Naive thymus-derived CD4-positive, alpha-beta T cell (primary cell): ENCODE measurements at regions of chr14 and their contacts with region 1.

Region 1: DNA sequence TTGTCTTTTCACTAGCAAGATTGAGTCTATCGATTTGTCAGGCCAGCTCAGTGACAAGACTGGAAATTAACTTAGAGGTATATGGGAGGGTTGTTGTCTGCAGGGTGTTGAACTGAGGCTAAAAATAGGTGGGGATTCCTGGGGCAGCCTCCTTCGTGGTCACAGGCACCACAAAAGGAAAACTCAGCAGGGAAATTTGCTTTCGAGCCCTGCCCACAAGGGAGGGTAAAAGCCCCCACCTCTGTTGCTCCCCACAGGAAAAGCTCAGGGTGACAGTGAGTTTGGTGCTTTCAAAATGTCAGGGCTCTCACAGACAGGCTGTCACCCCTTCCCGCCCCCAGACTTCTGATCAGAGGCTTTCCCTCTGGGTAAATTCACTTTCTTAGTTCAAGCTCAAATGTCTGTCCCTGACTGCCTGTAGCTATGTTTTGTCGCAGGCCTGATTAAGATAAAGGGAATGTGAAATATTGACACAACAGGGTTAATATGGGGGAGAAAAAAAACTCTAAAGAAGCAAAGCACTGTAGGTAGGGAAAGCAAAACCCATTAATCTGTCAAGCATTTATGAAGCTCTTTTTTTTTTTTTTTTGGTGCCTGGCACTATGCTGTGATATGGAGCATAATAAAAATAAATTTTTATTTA is 11.7 kb upstream of the NFKBIA start:
- DNase-seq: peak in 6 of 9 donors; percentile 18 to 80 (median 30)
- ATAC-seq: peak; percentile 67
- H3K4me3 ChIP-seq: no peak overlapping the region
- H3K4me3 Mint-ChIP-seq: peak overlapping the region; percentile 46 to 81 (median 72)
- H3K27ac ChIP-seq: peak overlapping the region; percentile 73
- H3K27ac Mint-ChIP-seq: peak overlapping the region; percentile 76 to 95 (median 92)
- H3K4me1 ChIP-seq: peaks cover 31 to 32% of the 10 kb centered on the region in 2 donors
- H3K4me1 Mint-ChIP-seq: peaks cover 29 to 48% (median 45%) of the 10 kb centered on the region in 7 donors
- H3K27me3 ChIP-seq: no peaks in the 10 kb centered on the region
- H3K27me3 Mint-ChIP-seq: peaks cover 0 to 7% (median 0%) of the 10 kb centered on the region in 5 donors

Region 2: DNA sequence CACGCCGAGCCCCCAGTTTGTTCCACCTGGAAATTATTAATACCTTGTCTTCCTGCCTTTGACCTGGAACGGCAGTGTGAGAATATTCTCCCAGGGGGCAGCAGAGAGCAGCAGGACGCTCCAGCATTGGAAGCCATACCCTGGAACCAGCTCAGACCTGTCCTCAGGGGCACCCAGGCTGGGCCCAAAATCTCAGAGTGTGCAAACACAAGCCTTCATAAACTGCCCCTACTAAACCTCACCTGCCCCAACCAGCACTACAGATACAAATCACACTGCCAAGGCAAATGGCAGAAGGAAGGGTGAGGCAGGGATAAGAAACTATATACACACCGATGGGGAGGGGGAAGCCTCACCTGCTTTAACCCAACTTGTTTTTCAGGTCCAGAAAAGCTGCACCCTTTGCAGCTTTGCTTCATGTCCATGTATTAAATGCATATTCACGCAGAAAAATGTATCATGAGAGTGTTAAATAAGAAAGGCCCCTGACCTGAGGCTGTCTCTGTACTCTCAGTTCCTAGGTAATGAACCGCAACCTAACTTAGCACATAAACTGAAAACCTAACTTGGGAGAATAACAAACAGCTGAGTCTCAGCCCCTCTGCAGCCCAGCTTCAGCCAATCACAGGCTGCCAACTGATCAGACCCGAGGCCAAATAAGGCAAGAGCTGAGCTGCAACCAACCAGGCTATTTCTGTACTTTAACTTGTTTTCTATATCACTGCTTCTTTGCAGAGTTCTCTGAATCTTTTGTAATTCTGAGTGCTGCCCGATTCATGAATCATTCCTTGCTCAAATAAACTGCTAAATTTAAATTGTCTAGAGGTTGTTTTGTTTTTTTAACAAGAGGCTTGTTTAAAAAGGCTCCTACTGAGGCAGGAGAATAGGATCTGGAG is 1084.3 kb before region 1 on chr14:
- CTCF ChIA-PET with region 1: interaction called, 4 read pairs
- POLR2A ChIA-PET with region 1: no interaction called
- intact Hi-C with region 1: loop called in 1 of 2 experiments (anchors 5 kb)
- DNase-seq: peak; percentile 11 to 62 (median 44)
- ATAC-seq: peak; percentile 80
- H3K4me3 ChIP-seq: no peak overlapping the region
- H3K4me3 Mint-ChIP-seq: no peak overlapping the region
- H3K27ac ChIP-seq: no peak overlapping the region
- H3K27ac Mint-ChIP-seq: peak overlapping the region in 3 of 9 donors; percentile 13 to 54 (median 30)
- H3K4me1 ChIP-seq: no peaks in the 10 kb centered on the region
- H3K4me1 Mint-ChIP-seq: peaks cover 0 to 19% (median 4%) of the 10 kb centered on the region in 7 donors
- H3K27me3 ChIP-seq: no peaks in the 10 kb centered on the region
- H3K27me3 Mint-ChIP-seq: no peaks in the 10 kb centered on the region

Region 3: DNA sequence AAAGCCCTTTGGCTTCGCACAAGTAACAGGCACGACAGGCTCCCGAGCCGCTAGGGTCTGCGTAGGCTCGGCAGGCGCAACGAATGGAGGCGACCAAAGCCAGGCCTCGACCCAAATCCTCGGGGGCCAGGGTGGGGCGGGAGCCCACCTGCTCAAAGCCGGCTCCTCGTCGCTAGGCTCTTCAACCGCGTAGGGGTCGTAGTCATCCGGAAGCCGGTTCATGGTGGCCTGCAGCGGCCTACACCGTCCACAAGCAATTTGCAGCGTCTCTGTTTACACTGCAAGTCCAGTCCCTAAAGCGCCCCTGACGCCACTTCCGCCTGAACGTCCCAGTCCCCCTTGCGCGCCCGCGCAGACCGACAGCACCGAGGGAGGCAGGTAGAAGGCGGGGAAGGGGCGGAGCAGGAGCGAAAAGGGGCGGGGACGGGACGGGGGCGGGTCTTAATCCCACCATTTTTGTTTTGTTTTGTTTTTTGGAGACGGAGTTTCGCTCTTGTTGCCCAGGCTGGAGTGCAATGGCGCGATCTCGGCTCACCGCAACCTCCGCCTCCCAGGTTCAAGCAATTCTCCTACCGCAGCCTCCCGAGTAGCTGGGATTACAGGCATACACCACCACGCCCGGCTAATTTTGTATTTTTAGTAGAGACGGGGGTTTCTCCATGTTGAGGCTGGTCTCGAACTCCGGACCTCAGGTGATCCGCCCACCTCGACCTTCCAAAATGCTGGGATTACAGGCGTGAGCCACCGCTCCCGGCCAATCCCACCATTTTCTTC is 876.6 kb before region 1 on chr14 and contains the start of gene EAPP:
- CTCF ChIA-PET with region 1: no interaction called
- POLR2A ChIA-PET with region 1: no interaction called
- intact Hi-C with region 1: loop called in 1 of 2 experiments (anchors 5 kb)
- DNase-seq: peak; percentile 84 to 95 (median 91)
- ATAC-seq: peak; percentile 100
- H3K4me3 ChIP-seq: peak within 1 kb of the TSS; percentile 100
- H3K4me3 Mint-ChIP-seq: peak within 1 kb of the TSS; percentile 95 to 99 (median 99)
- H3K27ac ChIP-seq: peak within 1 kb of the TSS; percentile 97
- H3K27ac Mint-ChIP-seq: peak within 1 kb of the TSS; percentile 95 to 100 (median 99)
- H3K4me1 ChIP-seq: peaks cover 18 to 24% of the 10 kb centered on the region in 2 donors
- H3K4me1 Mint-ChIP-seq: peaks cover 5 to 45% (median 31%) of the 10 kb centered on the region in 7 donors
- H3K27me3 ChIP-seq: no peaks in the 10 kb centered on the region
- H3K27me3 Mint-ChIP-seq: no peaks in the 10 kb centered on the region
- total RNA-seq, gene EAPP: 34.8 to 84.3 (median 60.9) TPM

Region 4: DNA sequence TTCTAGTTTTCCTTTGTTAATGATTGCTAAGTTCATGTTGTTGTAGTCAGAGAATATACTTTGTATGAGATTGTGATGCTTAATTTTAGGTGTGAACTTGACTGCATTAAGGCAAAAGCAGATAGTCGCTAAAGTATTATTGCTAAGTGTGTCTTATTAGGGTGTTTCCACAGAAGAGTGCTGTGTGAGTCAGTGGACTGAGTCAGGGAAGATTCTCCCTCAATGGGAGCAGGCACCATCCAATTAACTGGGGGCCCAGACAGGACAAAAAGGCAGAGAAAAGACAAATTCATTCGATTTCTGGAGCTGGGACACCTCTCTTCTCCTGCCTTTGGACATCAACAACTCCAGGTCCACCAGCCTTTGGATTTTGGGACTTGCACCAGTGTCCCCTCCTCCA is 589.6 kb before region 1 on chr14:
- CTCF ChIA-PET with region 1: no interaction called
- POLR2A ChIA-PET with region 1: no interaction called
- intact Hi-C with region 1: no loop called
- DNase-seq: no peak
- ATAC-seq: no peak
- H3K4me3 ChIP-seq: no peak overlapping the region
- H3K4me3 Mint-ChIP-seq: no peak overlapping the region
- H3K27ac ChIP-seq: no peak overlapping the region
- H3K27ac Mint-ChIP-seq: peak overlapping the region in 8 of 9 donors; percentile 14 to 65 (median 37)
- H3K4me1 ChIP-seq: peaks cover 0 to 6% of the 10 kb centered on the region in 2 donors
- H3K4me1 Mint-ChIP-seq: peaks cover 20 to 47% (median 31%) of the 10 kb centered on the region in 7 donors
- H3K27me3 ChIP-seq: no peaks in the 10 kb centered on the region
- H3K27me3 Mint-ChIP-seq: no peaks in the 10 kb centered on the region

Region 5: GRCh38 chr14:35140718-35141581 is 275.3 kb before region 1 on chr14:
- CTCF ChIA-PET with region 1: interaction called, 7 read pairs
- POLR2A ChIA-PET with region 1: interaction called, 6 read pairs
- intact Hi-C with region 1: loop called (anchors 1 kb)
- DNase-seq: peak in 4 of 9 donors; percentile 24 to 57 (median 40)
- ATAC-seq: peak; percentile 69
- H3K4me3 ChIP-seq: no peak overlapping the region
- H3K4me3 Mint-ChIP-seq: no peak overlapping the region
- H3K27ac ChIP-seq: peak overlapping the region; percentile 40
- H3K27ac Mint-ChIP-seq: peak overlapping the region in 6 of 9 donors; percentile 65 to 91 (median 75)
- H3K4me1 ChIP-seq: no peaks in the 10 kb centered on the region
- H3K4me1 Mint-ChIP-seq: peaks cover 2 to 26% (median 17%) of the 10 kb centered on the region in 7 donors
- H3K27me3 ChIP-seq: no peaks in the 10 kb centered on the region
- H3K27me3 Mint-ChIP-seq: no peaks in the 10 kb centered on the region

Region 6: DNA sequence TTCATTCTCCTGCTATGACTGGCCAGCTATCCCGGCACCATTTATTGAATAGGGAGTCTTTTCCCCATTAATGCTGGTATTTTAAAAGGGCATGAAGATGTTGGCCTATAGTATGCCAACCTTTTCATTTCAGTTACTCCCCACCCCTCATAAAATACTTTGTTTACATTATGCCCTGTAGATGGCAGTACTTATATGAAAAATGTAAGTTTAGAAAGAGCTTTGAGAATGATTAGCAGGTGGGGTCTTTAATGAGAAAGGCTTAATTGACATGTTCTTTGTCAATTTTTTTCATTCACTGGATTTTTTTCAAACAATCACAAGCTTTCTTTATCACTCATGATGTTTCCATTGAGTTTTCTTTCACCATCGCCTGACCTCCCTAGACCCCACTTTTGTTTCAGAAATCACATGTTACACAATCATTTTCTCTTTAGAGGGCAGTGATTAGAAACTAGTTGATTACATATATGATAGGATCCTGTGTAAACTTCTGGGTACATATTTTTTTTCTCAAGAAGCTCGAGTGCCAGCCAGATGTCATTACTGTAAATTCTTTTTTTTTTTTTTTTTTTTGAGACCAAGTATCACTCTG is 186.6 kb before region 1 on chr14:
- CTCF ChIA-PET with region 1: interaction called, 13 read pairs
- POLR2A ChIA-PET with region 1: no interaction called
- intact Hi-C with region 1: loop called in 1 of 2 experiments (anchors 1 kb)
- DNase-seq: peak in 6 of 9 donors; percentile 3 to 41 (median 30)
- ATAC-seq: peak; percentile 61
- H3K4me3 ChIP-seq: no peak overlapping the region
- H3K4me3 Mint-ChIP-seq: no peak overlapping the region
- H3K27ac ChIP-seq: no peak overlapping the region
- H3K27ac Mint-ChIP-seq: peak overlapping the region in 1 of 9 donors; percentile 72
- H3K4me1 ChIP-seq: no peaks in the 10 kb centered on the region
- H3K4me1 Mint-ChIP-seq: peaks cover 6 to 27% (median 16%) of the 10 kb centered on the region in 7 donors
- H3K27me3 ChIP-seq: no peaks in the 10 kb centered on the region
- H3K27me3 Mint-ChIP-seq: no peaks in the 10 kb centered on the region

Region 7: GRCh38 chr14:35320472-35320871 is 95.8 kb before region 1 on chr14:
- CTCF ChIA-PET with region 1: no interaction called
- POLR2A ChIA-PET with region 1: no interaction called
- intact Hi-C with region 1: no loop called
- DNase-seq: no peak
- ATAC-seq: no peak
- H3K4me3 ChIP-seq: no peak overlapping the region
- H3K4me3 Mint-ChIP-seq: no peak overlapping the region
- H3K27ac ChIP-seq: no peak overlapping the region
- H3K27ac Mint-ChIP-seq: peak overlapping the region in 1 of 9 donors; percentile 42
- H3K4me1 ChIP-seq: no peaks in the 10 kb centered on the region
- H3K4me1 Mint-ChIP-seq: peaks cover 0 to 14% (median 0%) of the 10 kb centered on the region in 7 donors
- H3K27me3 ChIP-seq: no peaks in the 10 kb centered on the region
- H3K27me3 Mint-ChIP-seq: no peaks in the 10 kb centered on the region